ENCODE measurements at regions of chr9 and their contacts with region 1.

Region 1: GRCh38 chr9:26131886-26132285 is 453.6 kb upstream of the TUSC1 start:
- DNase-seq: no peak
- ATAC-seq: peak in 1 of 2 donors; percentile 46
- H3K4me3 ChIP-seq: no peak overlapping the region
- H3K27ac ChIP-seq: no peak overlapping the region
- H3K4me1 ChIP-seq: no peaks in the 10 kb centered on the region
- H3K27me3 ChIP-seq: no peaks in the 10 kb centered on the region
- CTCF ChIP-seq: no peak
- POLR2A ChIP-seq: no peak

Region 2: GRCh38 chr9:26061948-26062571 is 69.8 kb before region 1 on chr9:
- in situ Hi-C with region 1: no loop called
- intact Hi-C with region 1: loop called (anchors 10 kb)
- DNase-seq: no peak
- ATAC-seq: no peak
- H3K4me3 ChIP-seq: no peak overlapping the region
- H3K27ac ChIP-seq: no peak overlapping the region
- H3K4me1 ChIP-seq: no peaks in the 10 kb centered on the region
- H3K27me3 ChIP-seq: no peaks in the 10 kb centered on the region
- CTCF ChIP-seq: no peak
- POLR2A ChIP-seq: no peak

Region 3: GRCh38 chr9:26077860-26078259 is 54.0 kb before region 1 on chr9:
- in situ Hi-C with region 1: no loop called
- intact Hi-C with region 1: no loop called
- DNase-seq: no peak
- ATAC-seq: no peak
- H3K4me3 ChIP-seq: no peak overlapping the region
- H3K27ac ChIP-seq: no peak overlapping the region
- H3K4me1 ChIP-seq: no peaks in the 10 kb centered on the region
- H3K27me3 ChIP-seq: no peaks in the 10 kb centered on the region
- CTCF ChIP-seq: no peak
- POLR2A ChIP-seq: no peak

Region 4: DNA sequence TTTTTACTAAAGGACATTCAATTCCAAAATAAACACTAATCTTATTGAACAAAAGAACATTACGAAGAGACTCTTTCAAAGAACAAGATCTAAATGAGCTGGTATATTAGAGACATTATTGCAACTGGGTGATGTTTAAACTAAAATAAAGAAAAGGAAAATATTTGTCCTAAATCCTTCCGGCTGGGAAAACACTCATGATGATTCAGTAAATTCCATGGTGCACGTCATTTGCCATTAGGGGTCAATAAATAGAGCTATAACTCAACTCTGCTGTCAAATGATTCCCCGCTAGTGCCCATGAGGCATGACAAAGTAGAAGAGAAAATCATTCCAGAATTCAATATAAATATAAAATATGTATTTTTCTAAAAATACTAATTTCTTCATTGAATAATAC is 111.8 kb after region 1 on chr9:
- in situ Hi-C with region 1: loop called in 1 of 4 experiments (anchors 25 kb)
- intact Hi-C with region 1: no loop called
- DNase-seq: no peak
- ATAC-seq: no peak
- H3K4me3 ChIP-seq: no peak overlapping the region
- H3K27ac ChIP-seq: no peak overlapping the region
- H3K4me1 ChIP-seq: no peaks in the 10 kb centered on the region
- H3K27me3 ChIP-seq: no peaks in the 10 kb centered on the region
- CTCF ChIP-seq: no peak
- POLR2A ChIP-seq: no peak

Region 5: GRCh38 chr9:26326473-26327044 is 194.7 kb after region 1 on chr9:
- in situ Hi-C with region 1: no loop called
- intact Hi-C with region 1: loop called (anchors 5 kb)
- DNase-seq: no peak
- ATAC-seq: peak in 1 of 2 donors; percentile 56
- H3K4me3 ChIP-seq: no peak overlapping the region
- H3K27ac ChIP-seq: no peak overlapping the region
- H3K4me1 ChIP-seq: no peaks in the 10 kb centered on the region
- H3K27me3 ChIP-seq: no peaks in the 10 kb centered on the region
- CTCF ChIP-seq: peak in 3 of 5 experiments; percentile 21 to 64 (median 55)
- POLR2A ChIP-seq: no peak

Measured in gastrocnemius medialis (tissue), 4 donors.